Naive thymus-derived CD4-positive, alpha-beta T cell (primary cell): ENCODE measurements at regions of chr18 and their contacts with region 1.

Region 1: GRCh38 chr18:26548429-26549262 is at the start of gene KCTD1:
- DNase-seq: peak in 8 of 9 donors; percentile 26 to 73 (median 52)
- ATAC-seq: peak; percentile 70
- H3K4me3 ChIP-seq: peak within 1 kb of the TSS; percentile 53
- H3K4me3 Mint-ChIP-seq: peak within 1 kb of the TSS; percentile 75 to 92 (median 86)
- H3K27ac ChIP-seq: no peak within 1 kb of the TSS
- H3K27ac Mint-ChIP-seq: peak within 1 kb of the TSS in 1 of 9 donors; percentile 82
- H3K4me1 ChIP-seq: peaks cover 0 to 4% of the 10 kb centered on the region in 2 donors
- H3K4me1 Mint-ChIP-seq: peaks cover 12 to 50% (median 42%) of the 10 kb centered on the region in 7 donors
- H3K27me3 ChIP-seq: peaks cover 7 to 10% of the 10 kb centered on the region in 2 donors
- H3K27me3 Mint-ChIP-seq: peaks cover 26 to 45% (median 33%) of the 10 kb centered on the region in 5 donors
- total RNA-seq, gene KCTD1: 2.1 to 4.5 (median 2.6) TPM

Region 2: GRCh38 chr18:26383454-26384270 is 165.0 kb before region 1 on chr18:
- CTCF ChIA-PET with region 1: no interaction called
- POLR2A ChIA-PET with region 1: no interaction called
- intact Hi-C with region 1: loop called in 1 of 2 experiments (anchors 10 kb)
- DNase-seq: peak in 5 of 9 donors; percentile 13 to 33 (median 28)
- ATAC-seq: peak; percentile 58
- H3K4me3 ChIP-seq: no peak overlapping the region
- H3K4me3 Mint-ChIP-seq: no peak overlapping the region
- H3K27ac ChIP-seq: no peak overlapping the region
- H3K27ac Mint-ChIP-seq: no peak overlapping the region
- H3K4me1 ChIP-seq: no peaks in the 10 kb centered on the region
- H3K4me1 Mint-ChIP-seq: peaks cover 0 to 6% (median 0%) of the 10 kb centered on the region in 7 donors
- H3K27me3 ChIP-seq: no peaks in the 10 kb centered on the region
- H3K27me3 Mint-ChIP-seq: no peaks in the 10 kb centered on the region

Region 3: DNA sequence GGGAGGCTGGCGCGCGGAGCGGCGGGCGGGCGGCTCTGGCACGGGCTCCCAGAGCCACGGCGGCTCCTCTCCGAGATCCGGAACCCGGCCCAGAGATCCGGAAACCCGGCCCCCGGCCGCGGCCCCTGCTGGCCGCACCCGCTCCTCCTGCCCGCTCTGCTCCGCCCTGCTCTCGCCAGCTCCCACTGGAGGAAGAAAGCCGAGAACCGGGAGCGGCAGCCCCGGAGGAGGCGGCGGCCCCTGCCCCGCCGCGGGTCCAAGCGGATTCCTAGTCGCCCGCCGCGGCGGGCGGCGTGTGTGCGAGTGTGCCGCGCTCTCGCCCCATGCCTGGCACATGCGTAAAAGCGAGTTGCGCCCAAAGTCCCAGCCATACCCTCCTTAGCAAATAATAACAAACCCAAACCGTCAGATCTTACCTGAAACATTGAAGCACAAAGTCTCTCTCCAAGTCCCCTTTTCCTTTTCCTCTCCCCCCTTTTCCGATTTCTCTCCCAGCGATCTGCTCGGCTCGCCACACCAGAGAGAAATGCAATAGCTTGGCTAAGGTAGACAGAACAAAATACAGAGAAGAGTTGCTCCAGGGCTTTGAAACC is 108.4 kb after region 1 on chr18:
- CTCF ChIA-PET with region 1: no interaction called
- POLR2A ChIA-PET with region 1: no interaction called
- intact Hi-C with region 1: loop called in 1 of 2 experiments (anchors 5 kb)
- DNase-seq: peak in 2 of 9 donors; percentile 13 to 40
- ATAC-seq: peak; percentile 73
- H3K4me3 ChIP-seq: no peak overlapping the region
- H3K4me3 Mint-ChIP-seq: peak overlapping the region; percentile 68 to 84 (median 79)
- H3K27ac ChIP-seq: no peak overlapping the region
- H3K27ac Mint-ChIP-seq: no peak overlapping the region
- H3K4me1 ChIP-seq: no peaks in the 10 kb centered on the region
- H3K4me1 Mint-ChIP-seq: peaks cover 7 to 20% (median 15%) of the 10 kb centered on the region in 7 donors
- H3K27me3 ChIP-seq: peaks cover 0 to 4% of the 10 kb centered on the region in 2 donors
- H3K27me3 Mint-ChIP-seq: peaks cover 67 to 79% (median 72%) of the 10 kb centered on the region in 5 donors

Region 4: DNA sequence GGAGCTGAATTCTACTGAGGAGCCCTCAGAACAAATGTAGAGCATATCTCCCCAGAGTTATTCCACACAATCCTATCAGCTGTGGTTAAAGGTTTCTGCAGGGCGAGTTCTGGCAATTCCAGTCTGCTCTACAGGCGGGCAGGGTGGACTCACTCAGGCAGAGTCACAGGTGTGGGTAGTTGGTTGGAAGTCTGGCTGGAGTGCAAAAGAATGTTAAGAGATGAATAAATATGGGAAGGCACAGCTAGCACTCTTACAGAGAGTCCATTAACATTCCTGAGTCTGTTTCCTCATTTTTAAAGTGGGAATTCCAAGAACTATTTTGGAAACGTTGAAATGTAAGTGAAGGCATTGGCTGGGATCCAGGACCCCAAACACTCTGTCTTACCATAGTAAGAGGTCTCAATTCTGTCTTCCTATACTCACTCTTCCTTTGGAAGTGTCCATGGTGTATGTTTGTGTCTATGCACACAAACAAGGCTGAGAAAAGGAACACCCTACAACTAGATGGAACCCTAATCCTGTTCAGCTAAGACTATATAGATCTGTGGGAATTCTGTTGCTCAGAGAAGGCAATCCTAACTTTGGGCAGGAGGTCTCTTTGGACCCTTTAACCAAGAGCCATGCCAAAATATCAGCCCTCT is 380.1 kb after region 1 on chr18:
- CTCF ChIA-PET with region 1: no interaction called
- POLR2A ChIA-PET with region 1: no interaction called
- intact Hi-C with region 1: no loop called
- DNase-seq: no peak
- ATAC-seq: no peak
- H3K4me3 ChIP-seq: no peak overlapping the region
- H3K4me3 Mint-ChIP-seq: no peak overlapping the region
- H3K27ac ChIP-seq: no peak overlapping the region
- H3K27ac Mint-ChIP-seq: no peak overlapping the region
- H3K4me1 ChIP-seq: no peaks in the 10 kb centered on the region
- H3K4me1 Mint-ChIP-seq: peaks cover 0 to under 1% (median 0%) of the 10 kb centered on the region in 7 donors
- H3K27me3 ChIP-seq: no peaks in the 10 kb centered on the region
- H3K27me3 Mint-ChIP-seq: peaks cover 0 to 4% (median 0%) of the 10 kb centered on the region in 5 donors